PC-3 (cell line): ENCODE measurements at regions of chr14 and their contacts with region 1.

Region 1: DNA sequence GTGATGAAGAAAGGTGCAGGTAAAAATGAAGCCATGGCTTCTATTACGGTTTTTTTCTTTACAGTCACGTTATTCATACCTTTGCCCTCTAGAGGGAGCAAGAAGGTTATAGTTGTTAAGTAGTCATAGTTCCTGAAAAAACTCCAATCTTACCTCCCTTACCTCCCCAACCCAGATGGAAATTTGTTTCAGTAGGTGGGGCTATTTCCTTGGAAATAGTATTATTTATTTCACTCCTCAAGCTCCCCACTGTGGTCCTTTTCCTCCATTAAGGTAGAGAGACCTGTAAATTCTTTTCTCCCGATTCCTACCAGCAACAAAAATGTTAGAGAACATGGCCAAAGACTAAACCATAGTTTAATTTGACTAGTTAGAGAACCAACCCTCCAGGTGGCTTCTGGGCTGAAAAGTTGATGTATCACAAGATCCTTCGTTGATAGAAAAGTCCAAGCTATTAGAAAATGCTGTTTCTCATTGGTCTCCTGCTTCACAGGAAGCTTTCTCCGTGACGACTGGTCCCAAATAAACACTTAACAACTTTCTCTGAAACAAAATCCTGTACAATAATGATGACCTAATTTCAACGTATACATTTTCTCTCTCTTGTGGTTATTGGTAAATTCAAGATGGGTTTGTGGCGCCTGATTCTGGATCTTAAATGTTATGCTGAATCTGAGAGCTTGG is 43.5 kb downstream of the TMX1 start:
- DNase-seq: peak; percentile 98
- ATAC-seq: peak; percentile 96
- H3K4me3 ChIP-seq: no peak overlapping the region
- H3K27ac ChIP-seq: peak overlapping the region; percentile 2; the same call in 1 of the 2 replicates
- H3K4me1 ChIP-seq: peaks cover 10% of the 10 kb centered on the region
- H3K27me3 ChIP-seq: no peaks in the 10 kb centered on the region
- CTCF ChIP-seq: peak; percentile 99

Region 2: GRCh38 chr14:51202914-51203665 is 80.5 kb before region 1 on chr14:
- CTCF ChIA-PET with region 1: no interaction called
- POLR2A ChIA-PET with region 1: no interaction called
- intact Hi-C with region 1: no loop called
- DNase-seq: no peak
- ATAC-seq: no peak
- H3K4me3 ChIP-seq: no peak overlapping the region
- H3K27ac ChIP-seq: no peak overlapping the region
- H3K4me1 ChIP-seq: peaks cover 9% of the 10 kb centered on the region; the same call in 1 of the 2 replicates
- H3K27me3 ChIP-seq: no peaks in the 10 kb centered on the region
- CTCF ChIP-seq: 0 out of 2 replicates have a peak, but pooled peaks have one; percentile 13

Region 3: DNA sequence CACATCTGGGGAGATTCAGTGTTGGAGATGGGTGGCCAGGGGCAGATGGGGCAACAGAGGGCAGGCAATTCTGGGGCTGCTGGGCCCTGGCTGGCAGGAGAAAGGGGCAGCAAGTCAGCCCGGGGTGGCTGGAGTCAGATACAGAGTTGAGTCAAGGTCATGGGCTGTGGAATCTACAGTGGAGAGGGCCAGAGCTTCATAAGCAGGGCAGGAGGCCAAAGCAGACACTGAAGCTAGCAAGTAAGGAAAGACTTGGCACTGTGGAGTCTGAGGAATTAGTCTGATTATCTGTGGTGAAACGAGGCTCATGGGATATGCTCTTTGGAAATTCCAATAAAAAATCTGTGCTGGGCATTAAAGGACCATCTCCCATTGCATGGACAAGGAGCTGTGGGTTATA is 52.0 kb after region 1 on chr14:
- CTCF ChIA-PET with region 1: no interaction called
- POLR2A ChIA-PET with region 1: no interaction called
- intact Hi-C with region 1: no loop called
- DNase-seq: no peak
- ATAC-seq: no peak
- H3K4me3 ChIP-seq: no peak overlapping the region
- H3K27ac ChIP-seq: no peak overlapping the region
- H3K4me1 ChIP-seq: no peaks in the 10 kb centered on the region
- H3K27me3 ChIP-seq: no peaks in the 10 kb centered on the region
- CTCF ChIP-seq: no peak

Region 4: DNA sequence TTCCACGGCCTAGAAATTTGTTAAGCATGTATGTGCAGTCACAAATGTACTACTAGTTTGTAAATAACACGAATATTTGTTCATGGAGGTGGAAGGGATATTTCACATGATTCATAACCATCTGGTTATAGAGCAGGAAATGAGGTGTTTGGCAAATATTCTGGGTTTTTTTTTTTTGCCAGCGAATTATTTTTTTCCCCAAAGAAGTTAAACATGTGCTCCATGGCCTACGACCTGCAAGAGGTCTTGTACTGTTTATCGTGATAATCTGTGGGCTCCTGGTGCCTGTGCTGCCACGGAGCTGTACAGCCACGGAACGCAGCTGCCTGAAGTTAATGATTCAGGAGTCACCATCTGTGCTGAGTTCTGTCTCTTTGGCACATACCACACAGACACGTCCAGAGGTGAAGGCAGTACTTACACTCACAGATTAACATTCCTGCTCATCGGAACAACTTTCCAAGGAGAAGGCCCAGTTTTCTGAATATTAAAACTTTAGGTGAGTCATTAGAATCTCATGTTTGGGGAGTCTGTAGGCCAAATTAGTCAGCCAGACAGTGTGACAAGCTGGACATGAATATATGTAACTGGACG is 112.8 kb after region 1 on chr14:
- CTCF ChIA-PET with region 1: interaction called, 4 read pairs
- POLR2A ChIA-PET with region 1: interaction called, 3 read pairs
- intact Hi-C with region 1: loop called (anchors 1 kb)
- DNase-seq: peak; percentile 99
- ATAC-seq: peak; percentile 48
- H3K4me3 ChIP-seq: peak overlapping the region; percentile 32; the same call in 1 of the 2 replicates
- H3K27ac ChIP-seq: peak overlapping the region; percentile 98
- H3K4me1 ChIP-seq: peaks cover 61% of the 10 kb centered on the region
- H3K27me3 ChIP-seq: no peaks in the 10 kb centered on the region
- CTCF ChIP-seq: no peak

Region 5: GRCh38 chr14:51539571-51540037 is 256.1 kb after region 1 on chr14:
- CTCF ChIA-PET with region 1: no interaction called
- POLR2A ChIA-PET with region 1: no interaction called
- intact Hi-C with region 1: loop called (anchors 1 kb)
- DNase-seq: peak; percentile 99
- ATAC-seq: peak; percentile 60
- H3K4me3 ChIP-seq: peak overlapping the region; percentile 22; the same call in 1 of the 2 replicates
- H3K27ac ChIP-seq: peak overlapping the region; percentile 96
- H3K4me1 ChIP-seq: peaks cover 50% of the 10 kb centered on the region
- H3K27me3 ChIP-seq: no peaks in the 10 kb centered on the region
- CTCF ChIP-seq: no peak

Region 6: DNA sequence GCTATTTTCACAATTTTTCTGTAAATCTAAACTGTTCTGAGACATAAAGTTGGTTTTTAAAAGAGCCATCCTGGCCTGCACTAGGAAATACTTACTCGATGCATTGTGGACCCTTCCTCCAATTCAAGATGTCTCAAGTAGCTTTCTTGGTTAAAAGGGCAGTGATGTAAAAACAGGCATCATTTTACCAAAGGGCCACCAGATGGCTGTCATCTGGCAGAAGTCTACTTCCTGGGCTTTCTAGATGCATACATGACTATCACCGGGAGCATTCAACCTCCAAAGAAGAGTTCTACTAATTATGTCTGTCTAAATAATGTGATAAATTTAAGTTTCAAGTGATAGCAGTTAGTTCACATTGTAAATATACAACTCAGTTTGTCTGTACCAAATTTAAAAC is 271.4 kb after region 1 on chr14:
- CTCF ChIA-PET with region 1: no interaction called
- POLR2A ChIA-PET with region 1: no interaction called
- intact Hi-C with region 1: loop called (anchors 2 kb)
- DNase-seq: peak; percentile 67
- ATAC-seq: peak; percentile 50
- H3K4me3 ChIP-seq: peak overlapping the region; percentile 47
- H3K27ac ChIP-seq: peak overlapping the region; percentile 72
- H3K4me1 ChIP-seq: peaks cover 47% of the 10 kb centered on the region
- H3K27me3 ChIP-seq: no peaks in the 10 kb centered on the region
- CTCF ChIP-seq: peak; percentile 67

Region 7: DNA sequence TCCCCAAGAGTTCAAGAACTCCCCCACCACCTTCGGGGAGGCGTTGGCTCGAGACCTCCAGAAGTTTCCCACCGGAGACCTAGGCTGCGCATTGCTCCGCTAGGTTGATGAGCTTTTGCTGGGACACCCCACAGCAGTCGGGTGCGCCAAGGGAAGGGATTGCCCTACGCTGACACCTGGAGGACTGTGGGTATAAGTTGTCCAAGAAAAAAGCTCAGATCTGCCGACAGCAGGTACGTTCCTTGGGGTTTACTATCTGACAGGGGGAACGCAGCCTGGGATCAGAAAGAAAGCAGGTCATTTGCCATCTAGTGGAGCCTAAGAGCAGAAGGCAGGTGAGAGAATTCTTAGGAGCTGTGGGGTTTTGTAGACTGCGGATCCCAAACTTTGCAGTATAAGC is 467.0 kb after region 1 on chr14:
- CTCF ChIA-PET with region 1: interaction called, 3 read pairs
- POLR2A ChIA-PET with region 1: no interaction called
- intact Hi-C with region 1: loop called (anchors 1 kb)
- DNase-seq: no peak
- ATAC-seq: no peak
- H3K4me3 ChIP-seq: no peak overlapping the region
- H3K27ac ChIP-seq: no peak overlapping the region
- H3K4me1 ChIP-seq: peaks cover 20% of the 10 kb centered on the region
- H3K27me3 ChIP-seq: no peaks in the 10 kb centered on the region
- CTCF ChIP-seq: no peak